ENCODE measurements at regions of chr12 and their contacts with region 1.

Region 1: GRCh38 chr12:40107098-40107802 is 1.4 kb upstream of the SLC2A13 start:
- DNase-seq: peak; percentile 76 to 96 (median 90)
- ATAC-seq: peak; percentile 47
- H3K4me3 ChIP-seq: peak overlapping the region; percentile 49 to 54
- H3K4me3 Mint-ChIP-seq: peak overlapping the region; percentile 92
- H3K27ac ChIP-seq: peak overlapping the region in 1 of 2 experiments; percentile 59
- H3K27ac Mint-ChIP-seq: peak overlapping the region; percentile 73
- H3K4me1 ChIP-seq: peaks cover 19% of the 10 kb centered on the region
- H3K4me1 Mint-ChIP-seq: peaks cover 35% of the 10 kb centered on the region
- H3K27me3 ChIP-seq: no peaks in the 10 kb centered on the region
- H3K27me3 Mint-ChIP-seq: no peaks in the 10 kb centered on the region
- CTCF ChIP-seq: peak; percentile 91

Region 2: DNA sequence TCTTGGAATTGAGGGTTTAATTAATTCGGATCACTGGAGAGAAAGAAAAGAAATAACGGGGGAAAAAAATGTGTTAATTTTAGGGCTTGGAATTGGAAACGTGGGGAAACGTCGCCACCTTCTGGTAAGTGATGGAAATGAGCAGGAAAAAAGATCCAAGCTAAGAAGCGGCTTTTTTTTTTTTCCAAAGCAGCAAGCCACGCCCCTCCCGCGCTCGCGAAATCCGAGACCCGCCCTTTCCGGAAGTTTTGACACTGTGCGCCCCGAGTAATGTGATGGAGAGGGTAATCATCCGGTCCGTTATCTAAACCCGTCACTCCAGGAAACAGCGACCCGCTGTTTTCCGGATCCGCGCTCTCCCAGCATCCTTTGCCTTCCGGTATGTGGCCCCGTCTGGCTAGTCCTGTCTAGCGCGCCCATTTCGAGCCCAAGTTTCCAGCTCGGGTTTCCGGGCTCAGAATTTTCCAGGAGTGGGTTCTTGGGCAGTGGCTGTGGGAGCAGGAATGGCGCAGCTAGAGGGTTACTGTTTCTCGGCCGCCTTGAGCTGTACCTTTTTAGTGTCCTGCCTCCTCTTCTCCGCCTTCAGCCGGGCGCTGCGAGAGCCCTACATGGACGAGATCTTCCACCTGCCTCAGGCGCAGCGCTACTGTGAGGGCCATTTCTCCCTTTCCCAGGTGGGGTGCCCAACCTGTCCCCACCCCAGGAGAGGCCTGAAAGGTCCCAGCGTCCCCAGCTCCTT is 1790.7 kb before region 1 on chr12 and contains the start of gene ALG10B:
- CTCF ChIA-PET with region 1: interaction called, 3 read pairs
- POLR2A ChIA-PET with region 1: no interaction called
- intact Hi-C with region 1: loop called in 1 of 2 experiments (anchors 2 kb)
- DNase-seq: peak; percentile 85 to 97 (median 91)
- ATAC-seq: peak; percentile 95
- H3K4me3 ChIP-seq: peak within 1 kb of the TSS; percentile 69 to 74
- H3K4me3 Mint-ChIP-seq: peak within 1 kb of the TSS; percentile 88
- H3K27ac ChIP-seq: peak within 1 kb of the TSS; percentile 85 to 92
- H3K27ac Mint-ChIP-seq: peak within 1 kb of the TSS; percentile 97
- H3K4me1 ChIP-seq: peaks cover 26% of the 10 kb centered on the region
- H3K4me1 Mint-ChIP-seq: peaks cover 27% of the 10 kb centered on the region
- H3K27me3 ChIP-seq: no peaks in the 10 kb centered on the region
- H3K27me3 Mint-ChIP-seq: no peaks in the 10 kb centered on the region
- CTCF ChIP-seq: peak; percentile 70
- total RNA-seq, gene ALG10B: 7.2 to 10.3 TPM

Region 3: GRCh38 chr12:39443081-39443928 is 663.9 kb before region 1 on chr12 and contains the start of gene KIF21A:
- CTCF ChIA-PET with region 1: interaction called, 3 read pairs
- POLR2A ChIA-PET with region 1: no interaction called
- intact Hi-C with region 1: loop called in 1 of 2 experiments (anchors 1 kb)
- DNase-seq: peak; percentile 78 to 96 (median 86)
- ATAC-seq: peak; percentile 87
- H3K4me3 ChIP-seq: peak within 1 kb of the TSS; percentile 74 to 84
- H3K4me3 Mint-ChIP-seq: peak within 1 kb of the TSS; percentile 96
- H3K27ac ChIP-seq: peak within 1 kb of the TSS; percentile 55 to 74
- H3K27ac Mint-ChIP-seq: peak within 1 kb of the TSS; percentile 90
- H3K4me1 ChIP-seq: peaks cover 16% of the 10 kb centered on the region
- H3K4me1 Mint-ChIP-seq: peaks cover 18% of the 10 kb centered on the region
- H3K27me3 ChIP-seq: no peaks in the 10 kb centered on the region
- H3K27me3 Mint-ChIP-seq: peaks cover 6% of the 10 kb centered on the region
- CTCF ChIP-seq: peak; percentile 35
- total RNA-seq, gene KIF21A: 5.1 to 6.0 TPM

Region 4: DNA sequence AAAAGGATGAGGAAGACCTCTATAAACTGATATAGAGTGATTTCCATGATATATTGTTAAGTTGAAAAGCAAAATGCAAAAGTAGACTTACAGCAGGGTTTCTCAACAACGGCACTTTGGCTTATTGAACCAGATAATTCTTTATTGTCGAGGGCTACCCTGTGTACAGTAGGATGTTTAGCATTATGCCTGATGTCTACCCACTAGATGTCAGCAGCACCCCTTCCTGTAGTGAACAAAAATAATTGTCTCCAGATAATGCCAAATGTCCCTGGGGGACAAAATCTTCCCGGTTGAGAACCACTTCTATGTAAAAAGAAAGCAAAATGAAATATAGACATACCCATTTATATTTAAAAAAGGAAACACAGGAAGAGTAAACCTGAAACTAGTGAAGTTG is 520.0 kb before region 1 on chr12:
- CTCF ChIA-PET with region 1: interaction called, 3 read pairs
- POLR2A ChIA-PET with region 1: no interaction called
- intact Hi-C with region 1: loop called (anchors 1 to 5 kb)
- DNase-seq: peak in 5 of 9 experiments; percentile 1 to 67 (median 19)
- ATAC-seq: peak; percentile 75
- H3K4me3 ChIP-seq: no peak overlapping the region
- H3K4me3 Mint-ChIP-seq: no peak overlapping the region
- H3K27ac ChIP-seq: no peak overlapping the region
- H3K27ac Mint-ChIP-seq: no peak overlapping the region
- H3K4me1 ChIP-seq: no peaks in the 10 kb centered on the region
- H3K4me1 Mint-ChIP-seq: peaks cover 14% of the 10 kb centered on the region
- H3K27me3 ChIP-seq: no peaks in the 10 kb centered on the region
- H3K27me3 Mint-ChIP-seq: no peaks in the 10 kb centered on the region
- CTCF ChIP-seq: peak; percentile 53

Region 5: DNA sequence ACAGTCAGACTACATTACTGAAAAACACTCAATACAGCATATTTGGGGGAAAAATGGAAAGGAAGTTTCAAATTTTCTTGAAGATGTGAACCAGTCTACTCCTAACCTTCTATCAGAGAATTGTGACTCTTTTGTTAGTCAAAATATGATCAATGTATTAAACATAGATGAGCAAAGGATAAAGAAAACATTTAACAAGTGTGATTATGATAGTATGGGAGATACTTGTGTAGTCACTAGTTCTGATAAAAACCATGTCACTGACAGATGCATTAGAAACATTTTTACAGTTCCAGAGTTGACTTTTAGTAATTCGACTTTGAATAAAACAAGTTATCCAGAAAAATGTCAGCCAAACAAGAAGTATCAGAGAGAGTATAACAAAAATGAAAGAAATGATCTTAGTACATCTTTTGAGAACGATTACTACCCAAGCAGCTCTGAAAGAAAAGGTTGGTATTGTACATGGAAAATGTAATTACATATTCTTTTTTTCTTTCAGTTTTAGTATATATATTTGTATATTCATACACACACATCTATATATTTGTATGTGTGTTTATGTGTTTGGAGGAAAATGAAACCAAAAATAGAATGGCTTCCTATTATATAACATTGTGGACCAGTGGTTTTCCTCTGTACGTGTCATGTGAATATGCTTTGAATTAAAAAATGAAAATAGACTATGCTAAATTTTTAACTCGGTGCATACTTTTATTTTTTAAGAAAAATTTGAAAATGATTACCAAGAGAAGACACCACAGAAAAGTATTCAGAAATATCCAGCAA is 424.4 kb before region 1 on chr12:
- CTCF ChIA-PET with region 1: no interaction called
- POLR2A ChIA-PET with region 1: no interaction called
- intact Hi-C with region 1: loop called (anchors 2 to 5 kb)
- DNase-seq: peak in 2 of 9 experiments; percentile 52 to 75
- ATAC-seq: peak; percentile 88
- H3K4me3 ChIP-seq: peak overlapping the region; percentile 24 to 44
- H3K4me3 Mint-ChIP-seq: peak overlapping the region; percentile 88
- H3K27ac ChIP-seq: peak overlapping the region; percentile 57 to 86
- H3K27ac Mint-ChIP-seq: peak overlapping the region; percentile 98
- H3K4me1 ChIP-seq: peaks cover 23% of the 10 kb centered on the region
- H3K4me1 Mint-ChIP-seq: peaks cover 29% of the 10 kb centered on the region
- H3K27me3 ChIP-seq: no peaks in the 10 kb centered on the region
- H3K27me3 Mint-ChIP-seq: no peaks in the 10 kb centered on the region
- CTCF ChIP-seq: no peak

Region 6: GRCh38 chr12:40010899-40011774 is 96.1 kb before region 1 on chr12:
- CTCF ChIA-PET with region 1: interaction called, 155 read pairs
- POLR2A ChIA-PET with region 1: interaction called, 6 read pairs
- intact Hi-C with region 1: loop called (anchors 1 kb)
- DNase-seq: peak in 8 of 9 experiments; percentile 27 to 82 (median 52)
- ATAC-seq: peak; percentile 92
- H3K4me3 ChIP-seq: peak overlapping the region; percentile 18 to 23
- H3K4me3 Mint-ChIP-seq: peak overlapping the region; percentile 74
- H3K27ac ChIP-seq: no peak overlapping the region
- H3K27ac Mint-ChIP-seq: no peak overlapping the region
- H3K4me1 ChIP-seq: peaks cover 5% of the 10 kb centered on the region
- H3K4me1 Mint-ChIP-seq: peaks cover 18% of the 10 kb centered on the region
- H3K27me3 ChIP-seq: no peaks in the 10 kb centered on the region
- H3K27me3 Mint-ChIP-seq: no peaks in the 10 kb centered on the region
- CTCF ChIP-seq: peak; percentile 81